OCI-LY7 (cell line): ENCODE measurements at regions of chr5 and their contacts with region 1.

Region 1: GRCh38 chr5:148831590-148832565 is 5.5 kb downstream of the ADRB2 start:
- DNase-seq: peak; percentile 86
- H3K4me3 ChIP-seq: peak overlapping the region; percentile 76
- H3K27ac ChIP-seq: peak overlapping the region; percentile 95
- H3K4me1 ChIP-seq: peaks cover 72% of the 10 kb centered on the region
- CTCF ChIP-seq: no peak

Region 2: DNA sequence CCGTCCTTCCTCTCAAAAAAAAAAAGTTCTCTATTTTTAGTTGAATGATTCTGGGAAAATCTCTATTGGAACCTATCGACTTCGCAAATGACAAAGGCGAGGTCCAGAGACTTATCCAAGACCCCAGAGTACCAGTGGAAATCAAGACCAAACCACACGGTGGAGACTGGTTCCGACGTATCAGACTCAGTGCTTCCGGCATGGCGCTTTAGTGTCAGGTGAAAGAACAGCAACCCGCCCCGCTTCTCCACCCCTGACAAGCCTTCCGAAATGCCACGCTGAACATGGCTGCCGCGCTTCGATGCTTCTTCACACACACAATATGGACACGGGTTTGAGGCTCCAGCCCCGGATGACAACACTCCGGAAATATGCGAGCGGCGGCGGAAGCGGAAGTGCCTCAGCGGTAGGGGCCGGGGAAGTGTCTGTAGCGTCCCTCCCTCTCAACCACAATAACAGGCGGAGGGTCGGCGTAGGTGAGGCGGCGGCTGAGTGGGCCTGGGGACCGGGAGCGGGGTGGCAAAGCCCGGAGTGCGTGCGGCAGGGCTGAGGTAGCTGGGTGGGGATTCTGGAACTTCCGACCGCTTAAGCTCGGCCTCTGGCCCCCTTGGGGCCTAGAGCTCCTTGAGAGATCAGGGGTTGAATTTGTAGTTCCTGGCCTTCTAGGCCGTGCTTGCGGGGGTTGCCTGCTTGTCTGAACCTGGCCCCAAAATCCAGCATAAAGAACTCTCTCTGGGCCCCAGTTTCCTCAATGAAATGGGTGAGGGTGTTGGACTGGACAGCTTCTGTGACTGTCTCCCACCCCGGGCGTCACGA is 448.1 kb before region 1 on chr5 and contains the start of gene FBXO38:
- CTCF ChIA-PET with region 1: no interaction called
- POLR2A ChIA-PET with region 1: no interaction called
- intact Hi-C with region 1: loop called (anchors 5 kb)
- DNase-seq: peak; percentile 97
- H3K4me3 ChIP-seq: peak within 1 kb of the TSS; percentile 91
- H3K27ac ChIP-seq: peak within 1 kb of the TSS; percentile 59
- H3K4me1 ChIP-seq: peaks cover 26% of the 10 kb centered on the region
- CTCF ChIP-seq: peak; percentile 60
- total RNA-seq, gene FBXO38: 29.9 and 37.6 TPM in 2 replicates

Region 3: DNA sequence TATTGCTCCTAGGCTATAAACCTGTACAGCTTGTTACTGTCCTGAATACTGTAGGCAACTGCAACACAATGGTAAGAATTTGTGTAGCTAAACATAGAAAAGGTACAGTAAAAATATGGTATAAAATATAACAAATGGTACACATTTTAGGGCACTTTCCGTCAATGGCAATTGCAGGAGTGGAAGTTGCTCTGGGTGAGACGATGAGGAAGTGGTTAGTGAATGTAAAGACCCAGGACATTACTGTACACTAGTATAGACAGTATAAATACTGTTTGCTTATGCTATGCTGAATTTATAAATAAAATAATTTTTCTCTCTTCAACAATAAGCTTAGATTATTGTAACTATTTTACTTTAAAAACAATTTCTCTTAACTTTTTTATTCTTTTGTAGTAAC is 21.1 kb before region 1 on chr5:
- CTCF ChIA-PET with region 1: interaction called, 3 read pairs
- POLR2A ChIA-PET with region 1: interaction called, 34 read pairs
- intact Hi-C with region 1: loop called (anchors 1 kb)
- DNase-seq: no peak
- H3K4me3 ChIP-seq: peak overlapping the region; percentile 70
- H3K27ac ChIP-seq: peak overlapping the region; percentile 93
- H3K4me1 ChIP-seq: peaks cover 70% of the 10 kb centered on the region
- CTCF ChIP-seq: no peak

Region 4: GRCh38 chr5:148849461-148849860 is 17.6 kb after region 1 on chr5:
- CTCF ChIA-PET with region 1: interaction called, 4 read pairs
- POLR2A ChIA-PET with region 1: interaction called, 13 read pairs
- intact Hi-C with region 1: no loop called
- DNase-seq: peak; percentile 36
- H3K4me3 ChIP-seq: no peak overlapping the region
- H3K27ac ChIP-seq: no peak overlapping the region
- H3K4me1 ChIP-seq: peaks cover 33% of the 10 kb centered on the region
- CTCF ChIP-seq: no peak

Region 5: GRCh38 chr5:149551200-149552037 is 719.5 kb after region 1 on chr5 and contains the start of gene CSNK1A1:
- CTCF ChIA-PET with region 1: no interaction called
- POLR2A ChIA-PET with region 1: no interaction called
- intact Hi-C with region 1: loop called (anchors 5 kb)
- DNase-seq: peak; percentile 99
- H3K4me3 ChIP-seq: peak within 1 kb of the TSS; percentile 98
- H3K27ac ChIP-seq: peak within 1 kb of the TSS; percentile 83
- H3K4me1 ChIP-seq: peaks cover 32% of the 10 kb centered on the region
- CTCF ChIP-seq: peak; percentile 92
- total RNA-seq, gene CSNK1A1: 161 and 176 TPM in 2 replicates